Thyroid gland (tissue), 4 donors: ENCODE measurements at regions of chr6 and their contacts with region 1.

Region 1: GRCh38 chr6:30800871-30801270 is 56.5 kb upstream of the IER3 start:
- DNase-seq: peak; percentile 73 to 78
- H3K4me3 ChIP-seq: no peak overlapping the region
- H3K27ac ChIP-seq: peak overlapping the region; percentile 72 to 84 (median 79)
- H3K4me1 ChIP-seq: peaks cover 23 to 27% of the 10 kb centered on the region in 2 donors
- H3K27me3 ChIP-seq: no peaks in the 10 kb centered on the region
- CTCF ChIP-seq: peak in 1 of 6 experiments; percentile 22
- POLR2A ChIP-seq: no peak

Region 2: DNA sequence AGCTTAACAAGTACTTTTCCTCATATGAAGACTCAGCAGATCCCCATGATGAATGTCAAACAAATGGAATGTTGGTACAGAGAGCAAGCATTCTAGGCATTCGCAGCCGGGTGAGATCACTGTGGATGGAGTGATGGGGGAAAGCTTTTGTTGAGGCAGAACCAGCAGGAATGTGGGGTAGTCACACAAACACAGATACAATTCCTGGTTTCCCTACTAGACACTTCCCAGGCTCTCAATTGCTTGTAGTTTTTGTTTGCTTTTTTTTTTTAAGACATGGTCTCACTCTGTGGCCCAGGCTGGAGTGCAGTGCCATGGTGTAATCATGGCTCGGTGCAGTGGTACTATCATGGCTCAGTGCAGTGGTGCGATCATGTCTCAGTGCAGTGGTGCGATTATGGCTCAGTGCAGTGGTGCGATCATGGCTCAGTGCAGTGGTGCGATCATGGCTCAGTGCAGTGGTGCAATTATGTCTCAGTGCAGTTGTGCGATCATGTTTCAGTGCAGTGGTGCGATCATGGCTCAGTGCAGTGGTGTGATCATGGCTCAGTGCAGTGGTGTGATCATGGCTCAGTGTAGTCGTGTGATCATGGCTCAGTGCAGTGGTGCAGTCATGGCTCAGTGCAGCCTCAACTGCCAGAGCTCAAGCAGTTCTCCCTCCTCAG is 41.2 kb before region 1 on chr6:
- intact Hi-C with region 1: loop called (anchors 5 kb)
- DNase-seq: no peak
- H3K4me3 ChIP-seq: no peak overlapping the region
- H3K27ac ChIP-seq: peak overlapping the region; percentile 60 to 73 (median 70)
- H3K4me1 ChIP-seq: peaks cover 26 to 52% of the 10 kb centered on the region in 2 donors
- H3K27me3 ChIP-seq: no peaks in the 10 kb centered on the region
- CTCF ChIP-seq: no peak
- POLR2A ChIP-seq: no peak

Region 3: GRCh38 chr6:30862156-30862875 is 61.4 kb after region 1 on chr6:
- intact Hi-C with region 1: no loop called
- DNase-seq: no peak
- H3K4me3 ChIP-seq: no peak overlapping the region
- H3K27ac ChIP-seq: peak overlapping the region; percentile 44 to 81 (median 53)
- H3K4me1 ChIP-seq: peaks cover 16 to 25% of the 10 kb centered on the region in 2 donors
- H3K27me3 ChIP-seq: no peaks in the 10 kb centered on the region
- CTCF ChIP-seq: no peak
- POLR2A ChIP-seq: no peak